Activated CD4-positive, alpha-beta T cell treated with anti-CD3 and anti-CD28 coated beads for 36 hours (primary cell): ENCODE measurements at regions of chr5 and their contacts with region 1.

Region 1: GRCh38 chr5:83564069-83564749 is 92.7 kb downstream of the VCAN start:
- DNase-seq: no peak
- ATAC-seq: no peak
- H3K4me3 Mint-ChIP-seq: no peak overlapping the region
- H3K27ac Mint-ChIP-seq: no peak overlapping the region
- H3K4me1 Mint-ChIP-seq: no peaks in the 10 kb centered on the region
- H3K27me3 Mint-ChIP-seq: peaks cover 9% of the 10 kb centered on the region

Region 2: DNA sequence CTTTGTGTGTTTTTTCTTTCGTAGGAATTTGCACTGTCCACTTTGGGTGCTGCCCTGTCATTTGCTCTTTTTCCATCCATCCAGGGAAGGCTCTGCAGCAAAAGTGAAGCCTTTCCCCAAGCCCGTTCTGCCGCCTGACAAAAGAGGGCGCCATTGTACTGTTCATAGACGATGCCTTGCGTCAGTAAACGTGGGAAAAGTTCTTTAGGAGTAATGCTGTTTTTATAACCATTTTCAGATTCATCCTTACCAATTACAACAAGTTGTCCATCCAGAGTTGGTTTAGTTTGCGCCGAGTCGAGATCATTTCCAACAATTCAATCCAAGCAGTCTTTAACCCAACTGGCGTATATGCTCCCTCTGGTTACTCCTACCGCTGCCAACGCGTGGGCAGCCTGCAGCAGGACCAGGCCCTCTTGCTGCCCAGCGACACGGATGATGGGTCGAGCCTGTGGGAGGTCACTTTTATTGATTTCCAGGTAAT is 1251.8 kb before region 1 on chr5:
- CTCF ChIA-PET with region 1: interaction called, 6 read pairs
- POLR2A ChIA-PET with region 1: no interaction called
- intact Hi-C with region 1: loop called in 1 of 2 experiments (anchors 2 kb)
- DNase-seq: peak; percentile 69
- ATAC-seq: peak; percentile 61
- H3K4me3 Mint-ChIP-seq: no peak overlapping the region
- H3K27ac Mint-ChIP-seq: no peak overlapping the region
- H3K4me1 Mint-ChIP-seq: no peaks in the 10 kb centered on the region
- H3K27me3 Mint-ChIP-seq: peaks cover 4% of the 10 kb centered on the region

Region 3: DNA sequence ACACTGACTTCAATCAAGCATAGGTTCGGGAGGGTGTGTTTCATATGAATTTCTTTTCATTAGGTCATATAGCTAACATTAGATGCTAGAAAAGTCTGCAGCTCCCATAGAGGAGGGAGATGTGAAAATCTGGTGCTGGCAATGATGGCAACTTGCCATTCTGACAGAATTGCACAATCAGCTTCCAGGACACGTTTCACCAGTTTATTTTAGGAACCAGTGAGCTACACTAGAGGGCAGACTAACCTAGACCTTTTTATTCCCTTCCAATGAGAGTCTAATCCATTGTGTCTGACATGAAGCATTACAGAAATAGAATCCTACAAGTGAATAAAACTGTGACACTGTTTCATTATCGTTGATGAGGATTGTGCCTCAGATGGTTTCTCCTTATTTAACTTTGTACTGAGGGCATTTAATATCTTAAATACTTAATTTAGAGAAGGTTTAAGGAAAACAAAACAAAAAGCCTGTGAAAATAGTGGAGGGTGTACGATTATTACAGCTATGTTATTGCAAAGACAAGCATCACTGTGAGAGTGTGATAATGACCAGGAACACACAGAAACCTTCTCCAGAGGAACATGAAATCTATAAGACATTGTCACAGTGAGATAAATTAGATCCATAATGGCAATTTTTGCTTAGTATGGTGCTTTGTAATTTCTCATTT is 922.7 kb before region 1 on chr5:
- CTCF ChIA-PET with region 1: no interaction called
- POLR2A ChIA-PET with region 1: no interaction called
- intact Hi-C with region 1: loop called (anchors 1 to 10 kb)
- DNase-seq: peak; percentile 29
- ATAC-seq: peak; percentile 74
- H3K4me3 Mint-ChIP-seq: no peak overlapping the region
- H3K27ac Mint-ChIP-seq: no peak overlapping the region
- H3K4me1 Mint-ChIP-seq: no peaks in the 10 kb centered on the region
- H3K27me3 Mint-ChIP-seq: no peaks in the 10 kb centered on the region

Region 4: DNA sequence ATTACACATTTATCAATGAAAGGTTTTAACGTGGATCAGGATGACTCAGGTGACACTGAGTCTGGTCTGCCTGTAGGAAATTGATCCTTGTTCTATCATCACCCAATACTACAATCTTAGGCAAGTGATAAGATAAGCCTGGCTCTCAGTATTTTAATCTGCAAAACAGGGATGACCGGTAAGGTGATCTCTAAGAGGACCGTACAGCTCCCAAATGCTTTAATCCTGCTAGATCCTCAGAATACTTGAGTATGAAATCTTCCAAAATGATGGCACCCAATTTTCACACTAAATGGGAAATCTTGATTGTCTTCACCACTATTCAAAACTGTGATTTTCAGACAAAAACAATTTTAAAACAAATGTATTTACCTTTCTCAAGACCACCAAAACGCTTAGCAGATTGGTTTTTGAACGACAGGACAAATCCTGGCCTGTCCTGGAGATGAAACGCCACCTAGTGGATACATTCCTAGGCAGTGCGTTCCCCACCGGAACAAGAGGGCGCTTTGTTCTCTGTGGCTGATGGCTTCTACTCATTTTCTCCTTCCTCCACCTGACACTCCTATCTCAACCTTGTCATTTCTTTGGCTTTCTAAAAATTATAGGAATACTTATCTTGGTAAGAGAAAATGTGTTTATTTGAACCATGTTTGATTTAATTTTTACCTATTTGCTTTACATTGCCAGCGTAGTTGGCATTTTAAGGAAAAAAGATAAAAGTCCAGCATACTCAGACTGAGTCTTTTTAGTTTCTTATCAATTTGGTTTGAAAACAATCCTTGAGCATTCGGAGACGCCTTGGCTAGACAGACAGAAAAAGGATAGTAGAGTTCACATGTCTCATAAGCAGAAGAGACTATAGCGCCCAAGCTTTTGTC is 133.8 kb before region 1 on chr5:
- CTCF ChIA-PET with region 1: no interaction called
- POLR2A ChIA-PET with region 1: no interaction called
- intact Hi-C with region 1: loop called in 1 of 2 experiments (anchors 5 kb)
- DNase-seq: peak; percentile 75
- ATAC-seq: peak; percentile 81
- H3K4me3 Mint-ChIP-seq: no peak overlapping the region
- H3K27ac Mint-ChIP-seq: no peak overlapping the region
- H3K4me1 Mint-ChIP-seq: no peaks in the 10 kb centered on the region
- H3K27me3 Mint-ChIP-seq: no peaks in the 10 kb centered on the region